Calu3 (cell line): ENCODE measurements at regions of chr17 and their contacts with region 1.

Region 1: GRCh38 chr17:39800540-39800939 is 62.8 kb downstream of the GRB7 start:
- DNase-seq: peak; percentile 85
- H3K4me3 Mint-ChIP-seq: no peak overlapping the region
- H3K27ac Mint-ChIP-seq: no peak overlapping the region
- H3K4me1 Mint-ChIP-seq: peaks cover 17% of the 10 kb centered on the region
- H3K27me3 Mint-ChIP-seq: no peaks in the 10 kb centered on the region
- CTCF ChIP-seq: no peak

Region 2: DNA sequence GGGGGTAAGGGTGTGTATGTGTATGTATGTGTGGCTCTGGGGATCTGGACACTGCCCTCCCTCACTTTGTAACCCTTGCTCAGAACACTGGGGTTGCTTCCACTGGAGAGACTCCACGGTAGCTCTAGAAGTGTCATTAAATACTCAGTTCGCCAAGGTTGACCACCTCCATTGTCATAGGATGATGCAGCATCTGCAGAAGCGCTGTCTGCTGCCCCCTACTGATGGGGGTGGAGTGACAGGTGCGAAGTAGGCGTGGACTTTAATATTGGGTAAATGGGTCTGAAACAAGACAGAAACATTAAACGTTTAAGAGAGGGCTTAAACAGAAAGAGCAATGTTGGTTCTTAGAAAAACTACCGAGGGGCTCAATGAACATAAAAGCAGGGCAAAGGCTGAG is 539.3 kb before region 1 on chr17:
- CTCF ChIA-PET with region 1: no interaction called
- intact Hi-C with region 1: no loop called
- DNase-seq: peak; percentile 70
- H3K4me3 Mint-ChIP-seq: no peak overlapping the region
- H3K27ac Mint-ChIP-seq: no peak overlapping the region
- H3K4me1 Mint-ChIP-seq: no peaks in the 10 kb centered on the region
- H3K27me3 Mint-ChIP-seq: no peaks in the 10 kb centered on the region
- CTCF ChIP-seq: peak; percentile 86

Region 3: GRCh38 chr17:39643271-39643670 is 157.3 kb before region 1 on chr17:
- CTCF ChIA-PET with region 1: interaction called, 46 read pairs
- intact Hi-C with region 1: no loop called
- DNase-seq: no peak
- H3K4me3 Mint-ChIP-seq: no peak overlapping the region
- H3K27ac Mint-ChIP-seq: no peak overlapping the region
- H3K4me1 Mint-ChIP-seq: peaks cover 62% of the 10 kb centered on the region
- H3K27me3 Mint-ChIP-seq: no peaks in the 10 kb centered on the region
- CTCF ChIP-seq: no peak

Region 4: GRCh38 chr17:39676198-39676819 is 124.2 kb before region 1 on chr17:
- CTCF ChIA-PET with region 1: interaction called, 145 read pairs
- intact Hi-C with region 1: no loop called
- DNase-seq: peak; percentile 100
- H3K4me3 Mint-ChIP-seq: peak overlapping the region; percentile 3
- H3K27ac Mint-ChIP-seq: peak overlapping the region; percentile 62
- H3K4me1 Mint-ChIP-seq: peaks cover 91% of the 10 kb centered on the region
- H3K27me3 Mint-ChIP-seq: peaks cover 6% of the 10 kb centered on the region
- CTCF ChIP-seq: no peak

Region 5: GRCh38 chr17:39738931-39739884 is 61.3 kb before region 1 on chr17:
- CTCF ChIA-PET with region 1: interaction called, 85 read pairs
- intact Hi-C with region 1: no loop called
- DNase-seq: peak; percentile 100
- H3K4me3 Mint-ChIP-seq: peak overlapping the region; percentile 77
- H3K27ac Mint-ChIP-seq: peak overlapping the region; percentile 21
- H3K4me1 Mint-ChIP-seq: peaks cover 54% of the 10 kb centered on the region
- H3K27me3 Mint-ChIP-seq: no peaks in the 10 kb centered on the region
- CTCF ChIP-seq: no peak

Region 6: DNA sequence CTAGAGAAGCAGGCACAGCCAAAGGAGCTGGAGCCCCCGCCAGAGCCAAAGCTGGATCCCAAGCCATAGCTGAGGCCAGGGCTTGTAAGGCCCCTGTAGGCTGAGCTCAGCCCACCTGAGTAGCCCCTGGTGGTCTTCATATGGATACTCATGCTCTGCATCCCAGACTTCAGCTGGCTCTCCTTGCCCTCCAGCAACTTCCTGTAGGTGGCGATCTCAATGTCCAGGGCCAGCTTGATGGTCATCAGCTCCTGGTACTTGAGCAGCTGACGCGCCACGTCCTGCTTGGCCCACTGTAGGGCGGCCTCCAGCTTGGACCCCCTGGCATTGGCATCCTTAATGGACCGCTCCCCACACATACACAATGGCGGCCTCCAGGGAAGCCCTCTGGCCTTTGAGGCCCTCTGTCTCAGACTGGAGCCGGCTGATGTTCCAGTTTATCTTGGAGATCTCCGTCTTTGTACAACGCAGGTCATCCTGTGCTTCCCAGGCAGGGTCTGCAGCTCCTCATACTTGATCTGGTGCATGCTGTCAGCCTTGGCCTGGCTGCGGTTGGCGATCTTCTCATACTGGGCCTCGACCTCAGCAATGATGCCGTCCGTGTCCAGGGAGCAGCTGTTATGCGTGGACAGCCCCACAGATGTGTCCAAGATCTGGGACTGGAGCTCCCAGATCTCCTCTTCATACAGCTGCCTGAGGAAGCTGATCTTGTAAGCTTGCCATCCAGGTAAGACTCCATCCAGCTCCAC is 34.7 kb after region 1 on chr17:
- CTCF ChIA-PET with region 1: interaction called, 1,210 read pairs
- intact Hi-C with region 1: no loop called
- DNase-seq: peak; percentile 79
- H3K4me3 Mint-ChIP-seq: no peak overlapping the region
- H3K27ac Mint-ChIP-seq: no peak overlapping the region
- H3K4me1 Mint-ChIP-seq: no peaks in the 10 kb centered on the region
- H3K27me3 Mint-ChIP-seq: no peaks in the 10 kb centered on the region
- CTCF ChIP-seq: no peak

Region 7: GRCh38 chr17:39927101-39927928 is 126.8 kb after region 1 on chr17 and contains the starts of genes LRRC3C and ORMDL3:
- CTCF ChIA-PET with region 1: interaction called, 28 read pairs
- intact Hi-C with region 1: no loop called
- DNase-seq: no peak
- H3K4me3 Mint-ChIP-seq: peak within 1 kb of the TSS; percentile 74
- H3K27ac Mint-ChIP-seq: peak within 1 kb of the TSS; percentile 66
- H3K4me1 Mint-ChIP-seq: peaks cover 60% of the 10 kb centered on the region
- H3K27me3 Mint-ChIP-seq: no peaks in the 10 kb centered on the region
- CTCF ChIP-seq: no peak
- total RNA-seq, gene LRRC3C: not detected in 2 replicates
- total RNA-seq, gene ORMDL3: 1,738 and 1,968 TPM in 2 replicates

Region 8: GRCh38 chr17:40075201-40075941 is 274.8 kb after region 1 on chr17:
- CTCF ChIA-PET with region 1: no interaction called
- intact Hi-C with region 1: no loop called
- DNase-seq: peak; percentile 98
- H3K4me3 Mint-ChIP-seq: peak overlapping the region; percentile 14
- H3K27ac Mint-ChIP-seq: peak overlapping the region; percentile 6
- H3K4me1 Mint-ChIP-seq: peaks cover 70% of the 10 kb centered on the region
- H3K27me3 Mint-ChIP-seq: no peaks in the 10 kb centered on the region
- CTCF ChIP-seq: no peak